Panc1 (cell line): ENCODE measurements at regions of chr3 and their contacts with region 1.

Region 1: DNA sequence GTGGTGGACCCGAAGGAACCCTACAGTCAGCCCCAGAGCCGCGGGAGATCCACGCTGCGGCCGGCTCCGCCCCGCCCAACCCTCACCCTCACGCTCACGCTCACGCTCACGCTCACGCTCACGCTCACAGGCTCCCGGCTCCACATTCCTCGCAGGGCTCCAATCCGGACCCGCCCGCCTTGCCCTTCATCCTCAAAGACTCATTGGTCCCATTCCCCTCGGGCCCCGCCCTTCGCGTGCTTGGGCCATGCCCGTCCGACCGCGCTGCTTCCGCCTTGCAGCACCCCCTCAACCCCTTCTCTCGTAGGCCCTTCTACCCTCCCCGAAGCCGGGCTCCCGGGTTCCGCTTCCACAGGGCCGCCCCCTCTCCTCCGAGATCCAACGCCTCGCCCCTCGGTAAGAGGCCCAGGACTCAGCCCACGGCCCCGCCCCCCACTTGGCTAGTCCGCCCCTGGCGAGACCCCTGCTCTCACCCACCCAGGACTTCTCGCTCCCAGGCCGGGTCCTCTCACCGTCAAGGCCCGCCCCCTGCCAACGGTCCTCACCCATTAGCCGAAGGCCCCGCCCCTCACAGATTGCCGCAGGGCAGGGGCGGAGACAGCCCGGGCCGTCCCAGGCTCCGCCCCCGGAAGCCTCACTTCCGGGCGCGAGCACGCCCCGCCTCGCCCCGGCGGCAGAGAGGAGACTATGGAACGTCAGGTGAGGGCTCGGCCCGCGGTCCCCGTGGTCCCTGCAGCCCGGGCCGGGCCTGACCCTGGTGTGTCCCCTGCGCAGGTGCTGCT is at the start of gene APEH:
- DNase-seq: peak; percentile 67
- ATAC-seq: peak; percentile 91
- H3K4me3 ChIP-seq: peak within 1 kb of the TSS; percentile 54 to 85
- H3K27ac ChIP-seq: peak within 1 kb of the TSS; percentile 94
- H3K4me1 ChIP-seq: peaks cover 11% of the 10 kb centered on the region
- H3K27me3 ChIP-seq: no peaks in the 10 kb centered on the region
- CTCF ChIP-seq: no peak
- total RNA-seq, gene APEH: 131 TPM

Region 2: DNA sequence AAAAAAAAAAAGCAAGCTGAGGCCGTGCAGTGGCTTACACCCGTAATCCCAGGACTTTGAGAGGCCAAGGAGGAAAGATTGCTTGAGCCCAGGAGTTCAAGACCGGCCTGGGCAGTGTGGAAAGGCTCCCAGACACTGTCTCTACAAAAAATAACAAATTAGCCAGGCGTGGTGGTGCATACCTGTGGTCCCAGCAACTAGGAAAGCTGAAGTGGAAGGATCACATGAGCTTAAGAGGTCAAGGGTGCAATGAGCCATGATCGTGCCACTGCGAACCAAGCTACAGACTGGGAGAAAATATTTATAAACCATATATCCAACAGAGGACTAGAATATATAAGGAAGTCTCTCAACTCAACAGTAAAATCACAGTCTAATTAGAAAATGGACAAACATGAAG is 492.6 kb before region 1 on chr3:
- CTCF ChIA-PET with region 1: no interaction called
- POLR2A ChIA-PET with region 1: no interaction called
- in situ Hi-C with region 1: no loop called
- intact Hi-C with region 1: no loop called
- DNase-seq: no peak
- ATAC-seq: no peak
- H3K4me3 ChIP-seq: no peak overlapping the region
- H3K27ac ChIP-seq: no peak overlapping the region
- H3K4me1 ChIP-seq: no peaks in the 10 kb centered on the region
- H3K27me3 ChIP-seq: no peaks in the 10 kb centered on the region
- CTCF ChIP-seq: no peak

Region 3: GRCh38 chr3:49523756-49524747 is 149.9 kb before region 1 on chr3:
- CTCF ChIA-PET with region 1: no interaction called
- POLR2A ChIA-PET with region 1: no interaction called
- in situ Hi-C with region 1: no loop called
- intact Hi-C with region 1: no loop called
- DNase-seq: no peak
- ATAC-seq: no peak
- H3K4me3 ChIP-seq: no peak overlapping the region
- H3K27ac ChIP-seq: no peak overlapping the region
- H3K4me1 ChIP-seq: no peaks in the 10 kb centered on the region
- H3K27me3 ChIP-seq: no peaks in the 10 kb centered on the region
- CTCF ChIP-seq: no peak

Region 4: DNA sequence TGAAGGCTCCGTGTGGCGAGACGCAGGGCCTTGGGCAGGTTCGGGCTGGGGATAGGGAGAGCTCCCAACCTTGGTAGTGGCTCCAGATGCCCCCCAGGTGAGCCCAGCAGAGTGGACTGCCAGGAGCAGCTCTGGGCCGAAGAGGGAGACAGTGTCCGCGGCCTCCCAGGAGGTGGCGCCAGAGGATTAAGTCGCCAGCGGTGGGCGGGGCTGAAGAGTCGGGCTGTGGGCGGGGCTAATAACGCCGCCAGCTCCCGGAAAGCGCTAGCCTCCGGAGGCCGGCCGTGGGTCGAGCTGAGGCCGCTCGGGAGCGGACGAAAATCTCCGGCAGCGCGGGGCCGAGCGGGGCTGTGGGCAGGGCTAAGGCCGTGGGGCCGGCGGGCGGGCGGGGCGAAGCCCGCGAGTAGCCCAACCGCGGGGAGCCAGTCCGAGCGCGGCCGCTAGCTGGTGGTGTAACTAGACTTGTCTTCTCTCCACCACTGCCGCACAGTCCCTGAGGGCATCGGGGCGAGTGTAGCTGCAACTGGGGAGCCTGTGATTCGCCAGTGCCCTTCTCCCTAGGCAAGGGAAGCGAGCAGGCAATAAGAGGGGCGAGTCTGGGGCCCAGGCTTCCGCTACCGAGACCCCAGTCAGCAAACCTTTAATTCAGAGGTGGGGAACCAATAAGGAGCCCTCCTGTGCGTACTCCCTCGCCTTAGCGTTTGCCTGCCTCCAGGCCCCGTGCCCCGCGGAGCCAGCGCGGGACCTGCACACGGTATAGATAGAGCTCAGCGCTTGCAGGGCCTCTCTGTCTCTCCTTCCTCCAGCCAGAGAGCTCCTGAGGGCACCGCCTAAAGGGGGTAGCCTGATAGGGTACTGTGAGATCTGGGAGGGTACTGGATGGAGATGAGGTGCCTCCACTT is 134.0 kb before region 1 on chr3:
- CTCF ChIA-PET with region 1: interaction called, 30 read pairs
- POLR2A ChIA-PET with region 1: no interaction called
- in situ Hi-C with region 1: no loop called
- intact Hi-C with region 1: loop called (anchors 2 kb)
- DNase-seq: peak; percentile 39
- ATAC-seq: peak; percentile 98
- H3K4me3 ChIP-seq: peak overlapping the region; percentile 50 to 63
- H3K27ac ChIP-seq: peak overlapping the region; percentile 72
- H3K4me1 ChIP-seq: peaks cover 4% of the 10 kb centered on the region; the same call in 1 of the 2 replicates
- H3K27me3 ChIP-seq: no peaks in the 10 kb centered on the region
- CTCF ChIP-seq: peak; percentile 92

Region 5: GRCh38 chr3:49553692-49554632 is 119.9 kb before region 1 on chr3 and contains the start of gene BSN:
- CTCF ChIA-PET with region 1: interaction called, 10 read pairs
- POLR2A ChIA-PET with region 1: no interaction called
- in situ Hi-C with region 1: no loop called
- intact Hi-C with region 1: no loop called
- DNase-seq: peak; percentile 10
- ATAC-seq: peak; percentile 92
- H3K4me3 ChIP-seq: peak within 1 kb of the TSS; percentile 75 to 87
- H3K27ac ChIP-seq: peak within 1 kb of the TSS; percentile 89
- H3K4me1 ChIP-seq: no peaks in the 10 kb centered on the region
- H3K27me3 ChIP-seq: peaks cover 4% of the 10 kb centered on the region; the same call in 1 of the 2 replicates
- CTCF ChIP-seq: no peak
- total RNA-seq, gene BSN: 0.87 TPM

Region 6: GRCh38 chr3:49790626-49791411 is 116.9 kb after region 1 on chr3:
- CTCF ChIA-PET with region 1: interaction called, 10 read pairs
- POLR2A ChIA-PET with region 1: no interaction called
- in situ Hi-C with region 1: no loop called
- intact Hi-C with region 1: no loop called
- DNase-seq: no peak
- ATAC-seq: no peak
- H3K4me3 ChIP-seq: no peak overlapping the region
- H3K27ac ChIP-seq: no peak overlapping the region
- H3K4me1 ChIP-seq: peaks cover 4% of the 10 kb centered on the region
- H3K27me3 ChIP-seq: no peaks in the 10 kb centered on the region
- CTCF ChIP-seq: no peak